B cell (primary cell): ENCODE measurements at regions of chr14 and their contacts with region 1.

Region 1: DNA sequence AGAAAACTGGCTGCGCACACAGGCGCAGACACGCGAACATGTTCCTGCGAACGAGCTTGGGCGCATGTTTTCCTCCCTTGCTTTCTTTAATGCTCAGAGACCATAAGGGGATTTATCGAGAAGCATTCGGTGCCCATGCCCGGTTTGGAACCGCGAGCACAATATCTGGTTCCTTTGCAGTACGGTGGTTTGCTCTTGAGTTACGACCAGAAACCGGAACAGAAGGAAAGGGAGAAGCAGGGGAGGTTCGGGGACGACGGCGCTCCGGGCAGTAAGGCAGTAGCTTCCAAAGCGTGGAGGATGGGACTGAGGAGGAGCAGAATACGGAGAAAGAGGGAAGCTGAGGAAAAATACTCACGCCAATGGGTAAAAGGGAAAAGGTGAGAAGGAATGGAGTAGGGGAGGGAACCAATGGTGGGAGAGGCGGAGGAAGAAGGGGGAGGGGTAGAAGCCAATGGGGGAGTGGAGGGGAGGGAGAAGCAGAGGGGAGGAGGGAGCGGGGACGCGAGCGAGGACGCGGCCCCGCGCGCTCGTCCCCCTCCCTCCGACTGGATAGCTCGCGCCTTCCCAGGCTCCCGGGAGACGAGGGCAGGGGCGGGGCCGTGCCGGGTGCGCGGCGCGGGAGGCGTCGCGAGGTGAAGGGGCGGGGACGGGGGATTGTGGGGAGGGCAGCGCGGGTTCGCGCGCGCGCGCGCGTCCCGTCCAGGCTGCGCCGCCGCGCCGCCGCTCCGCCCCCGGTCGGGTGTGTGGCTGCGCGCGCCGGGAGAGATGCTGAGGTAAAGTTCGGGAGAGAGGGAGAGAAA is 625 bp upstream of the ARHGAP5 start:
- DNase-seq: no peak
- ATAC-seq: peak; percentile 66
- H3K4me3 ChIP-seq: peak overlapping the region; percentile 83 to 96 (median 92)
- H3K4me3 Mint-ChIP-seq: peak overlapping the region; percentile 96
- H3K27ac ChIP-seq: peak overlapping the region; percentile 53 to 62
- H3K27ac Mint-ChIP-seq: peak overlapping the region; percentile 96
- H3K4me1 ChIP-seq: peaks cover 11 to 17% of the 10 kb centered on the region in 2 donors
- H3K4me1 Mint-ChIP-seq: peaks cover 34% of the 10 kb centered on the region
- H3K27me3 ChIP-seq: no peaks in the 10 kb centered on the region
- H3K27me3 Mint-ChIP-seq: no peaks in the 10 kb centered on the region
- CTCF ChIP-seq: no peak

Region 2: DNA sequence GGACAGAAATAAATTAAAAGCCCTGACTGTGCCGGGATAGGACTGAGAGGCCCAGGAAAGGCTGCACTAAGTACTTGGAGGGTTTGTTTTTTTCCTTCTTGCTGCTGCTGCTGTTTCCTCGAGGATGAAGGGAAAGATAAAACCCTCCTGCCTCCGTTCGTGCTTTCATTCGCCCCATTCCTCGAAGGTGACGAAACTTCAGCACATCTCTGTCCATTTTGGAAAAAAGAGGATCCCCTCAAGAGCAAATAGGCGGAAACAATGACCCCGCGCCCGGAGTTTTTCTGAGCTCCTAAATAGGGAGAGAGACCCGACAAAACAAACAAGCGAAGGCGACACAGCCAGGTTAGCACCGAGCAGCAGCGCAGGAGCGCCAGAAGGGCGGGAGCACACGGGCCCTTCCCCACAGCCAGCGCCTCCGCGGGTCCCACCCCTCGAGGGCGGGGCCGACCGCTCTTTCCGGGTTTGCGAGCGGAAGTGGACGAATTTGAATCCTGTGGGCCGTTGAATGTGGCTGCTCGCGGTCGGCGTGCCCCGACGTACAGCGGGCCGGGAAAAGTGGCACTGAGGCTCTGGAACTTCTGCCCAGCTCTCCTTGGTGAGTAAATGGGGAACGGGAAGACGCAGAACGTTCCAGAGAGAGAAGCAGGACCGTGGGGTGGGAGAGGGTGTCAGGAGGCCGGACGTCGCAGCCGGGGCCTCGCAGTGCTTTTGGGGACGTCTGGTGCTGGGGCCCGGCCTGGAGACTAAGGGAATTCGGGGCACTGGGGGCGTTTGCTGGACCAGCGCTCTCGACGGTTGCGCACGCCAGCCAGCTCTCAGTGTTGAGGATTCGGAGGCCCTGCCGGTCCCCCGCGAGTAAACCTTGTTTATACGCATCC is 1517.6 kb before region 1 on chr14 and contains the start of gene G2E3:
- CTCF ChIA-PET with region 1: no interaction called
- POLR2A ChIA-PET with region 1: no interaction called
- intact Hi-C with region 1: loop called (anchors 5 kb)
- DNase-seq: peak; percentile 90
- ATAC-seq: peak; percentile 99
- H3K4me3 ChIP-seq: peak within 1 kb of the TSS; percentile 87 to 99 (median 95)
- H3K4me3 Mint-ChIP-seq: peak within 1 kb of the TSS; percentile 100
- H3K27ac ChIP-seq: peak within 1 kb of the TSS; percentile 77 to 89
- H3K27ac Mint-ChIP-seq: peak within 1 kb of the TSS; percentile 98
- H3K4me1 ChIP-seq: peaks cover 15 to 17% of the 10 kb centered on the region in 2 donors
- H3K4me1 Mint-ChIP-seq: peaks cover 32% of the 10 kb centered on the region
- H3K27me3 ChIP-seq: no peaks in the 10 kb centered on the region
- H3K27me3 Mint-ChIP-seq: no peaks in the 10 kb centered on the region
- CTCF ChIP-seq: no peak
- total RNA-seq, gene G2E3: 29.2 and 35.4 TPM in 2 replicates

Region 3: GRCh38 chr14:31026395-31027118 is 1049.9 kb before region 1 on chr14:
- CTCF ChIA-PET with region 1: no interaction called
- POLR2A ChIA-PET with region 1: interaction called, 4 read pairs
- intact Hi-C with region 1: loop called (anchors 2 kb)
- DNase-seq: peak; percentile 95
- ATAC-seq: peak; percentile 94
- H3K4me3 ChIP-seq: peak overlapping the region; percentile 85 to 98 (median 93)
- H3K4me3 Mint-ChIP-seq: peak overlapping the region; percentile 97
- H3K27ac ChIP-seq: peak overlapping the region; percentile 71 to 93
- H3K27ac Mint-ChIP-seq: peak overlapping the region; percentile 93
- H3K4me1 ChIP-seq: peaks cover 15 to 17% of the 10 kb centered on the region in 2 donors
- H3K4me1 Mint-ChIP-seq: peaks cover 40% of the 10 kb centered on the region
- H3K27me3 ChIP-seq: no peaks in the 10 kb centered on the region
- H3K27me3 Mint-ChIP-seq: no peaks in the 10 kb centered on the region
- CTCF ChIP-seq: no peak

Region 4: GRCh38 chr14:31510222-31510621 is 566.3 kb before region 1 on chr14:
- CTCF ChIA-PET with region 1: interaction called, 5 read pairs
- POLR2A ChIA-PET with region 1: no interaction called
- intact Hi-C with region 1: loop called (anchors 5 kb)
- DNase-seq: peak; percentile 52
- ATAC-seq: no peak
- H3K4me3 ChIP-seq: no peak overlapping the region
- H3K4me3 Mint-ChIP-seq: no peak overlapping the region
- H3K27ac ChIP-seq: no peak overlapping the region
- H3K27ac Mint-ChIP-seq: no peak overlapping the region
- H3K4me1 ChIP-seq: no peaks in the 10 kb centered on the region
- H3K4me1 Mint-ChIP-seq: no peaks in the 10 kb centered on the region
- H3K27me3 ChIP-seq: no peaks in the 10 kb centered on the region
- H3K27me3 Mint-ChIP-seq: no peaks in the 10 kb centered on the region
- CTCF ChIP-seq: peak; percentile 82

Region 5: DNA sequence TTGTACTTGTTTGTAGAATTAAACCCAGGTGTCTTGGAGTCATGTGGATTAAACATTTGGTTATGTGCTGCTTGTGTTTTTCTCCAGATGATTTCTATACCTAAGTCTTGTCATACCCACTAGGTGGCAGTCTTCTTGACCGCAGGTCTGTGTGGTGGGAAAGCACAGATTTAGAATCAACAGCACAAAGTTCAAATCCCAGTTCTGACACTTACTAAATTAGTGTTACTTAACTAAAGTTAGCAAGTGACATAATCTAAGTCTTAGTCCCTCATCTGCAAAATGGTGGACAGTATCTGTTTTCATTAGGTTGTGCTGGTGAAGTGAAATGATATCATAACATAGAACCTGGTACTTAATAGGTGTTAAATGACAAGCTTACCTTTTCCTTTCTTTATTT is 150.4 kb before region 1 on chr14:
- CTCF ChIA-PET with region 1: interaction called, 13 read pairs
- POLR2A ChIA-PET with region 1: no interaction called
- intact Hi-C with region 1: loop called (anchors 10 kb)
- DNase-seq: peak; percentile 64
- ATAC-seq: peak; percentile 53
- H3K4me3 ChIP-seq: no peak overlapping the region
- H3K4me3 Mint-ChIP-seq: no peak overlapping the region
- H3K27ac ChIP-seq: no peak overlapping the region
- H3K27ac Mint-ChIP-seq: no peak overlapping the region
- H3K4me1 ChIP-seq: no peaks in the 10 kb centered on the region
- H3K4me1 Mint-ChIP-seq: no peaks in the 10 kb centered on the region
- H3K27me3 ChIP-seq: no peaks in the 10 kb centered on the region
- H3K27me3 Mint-ChIP-seq: no peaks in the 10 kb centered on the region
- CTCF ChIP-seq: peak; percentile 74

Region 6: DNA sequence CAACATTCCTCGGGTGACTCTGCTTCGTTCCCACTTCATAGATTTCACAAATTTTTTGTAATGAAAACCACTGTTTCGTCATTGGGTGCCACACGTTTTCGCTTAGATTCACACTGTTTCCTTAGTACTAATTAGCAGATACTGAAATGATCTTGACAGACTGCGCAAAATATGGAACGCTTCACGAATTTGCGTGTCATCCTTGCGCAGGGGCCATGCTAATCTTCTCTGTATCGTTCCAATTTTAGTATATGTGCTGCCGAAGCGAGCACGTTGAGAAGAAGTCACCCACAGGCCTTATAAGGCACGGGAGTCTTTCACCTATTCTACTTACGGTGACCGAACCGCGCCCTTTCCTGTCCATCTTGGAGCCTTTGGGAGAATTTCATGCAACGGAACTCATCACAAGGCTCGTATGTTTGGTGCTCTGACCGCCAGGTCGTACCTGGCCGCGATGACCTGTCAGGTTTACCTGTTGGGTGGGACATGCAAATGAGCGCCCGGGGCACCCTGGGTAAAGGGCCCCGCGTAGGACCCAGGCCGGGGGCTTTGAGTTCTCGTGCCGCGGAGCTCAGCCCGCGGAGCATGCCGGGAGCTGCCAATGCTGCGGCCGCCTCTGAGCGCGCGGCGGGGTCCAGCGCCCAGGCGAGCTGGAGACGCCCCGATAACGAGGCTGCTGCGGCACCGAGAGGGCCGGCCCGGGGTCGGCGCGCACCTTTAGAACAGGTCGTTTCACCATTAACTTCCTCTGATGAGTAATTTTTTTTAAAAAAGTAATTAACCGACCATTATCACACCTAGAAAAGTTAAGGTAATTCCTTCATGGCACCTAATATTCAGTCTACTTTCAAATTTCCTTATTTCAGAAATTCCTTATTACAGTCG is 126.8 kb after region 1 on chr14 and contains the start of gene RNU6-8:
- CTCF ChIA-PET with region 1: interaction called, 22 read pairs
- POLR2A ChIA-PET with region 1: interaction called, 33 read pairs
- intact Hi-C with region 1: loop called (anchors 1 kb)
- DNase-seq: peak; percentile 94
- ATAC-seq: peak; percentile 77
- H3K4me3 ChIP-seq: peak within 1 kb of the TSS; percentile 67 to 88 (median 87)
- H3K4me3 Mint-ChIP-seq: peak within 1 kb of the TSS; percentile 92
- H3K27ac ChIP-seq: peak within 1 kb of the TSS; percentile 99
- H3K27ac Mint-ChIP-seq: peak within 1 kb of the TSS; percentile 99
- H3K4me1 ChIP-seq: peaks cover 13 to 27% of the 10 kb centered on the region in 2 donors
- H3K4me1 Mint-ChIP-seq: peaks cover 48% of the 10 kb centered on the region
- H3K27me3 ChIP-seq: no peaks in the 10 kb centered on the region
- H3K27me3 Mint-ChIP-seq: no peaks in the 10 kb centered on the region
- CTCF ChIP-seq: no peak
- total RNA-seq, gene RNU6-8: not detected in 2 replicates

Region 7: GRCh38 chr14:32252030-32252670 is 175.7 kb after region 1 on chr14:
- CTCF ChIA-PET with region 1: interaction called, 303 read pairs
- POLR2A ChIA-PET with region 1: interaction called, 12 read pairs
- intact Hi-C with region 1: loop called (anchors 1 kb)
- DNase-seq: peak; percentile 77
- ATAC-seq: peak; percentile 90
- H3K4me3 ChIP-seq: no peak overlapping the region
- H3K4me3 Mint-ChIP-seq: no peak overlapping the region
- H3K27ac ChIP-seq: no peak overlapping the region
- H3K27ac Mint-ChIP-seq: no peak overlapping the region
- H3K4me1 ChIP-seq: peaks cover 0 to 5% of the 10 kb centered on the region in 2 donors
- H3K4me1 Mint-ChIP-seq: no peaks in the 10 kb centered on the region
- H3K27me3 ChIP-seq: no peaks in the 10 kb centered on the region
- H3K27me3 Mint-ChIP-seq: no peaks in the 10 kb centered on the region
- CTCF ChIP-seq: peak; percentile 87